Activated CD4-positive, alpha-beta memory T cell treated with anti-CD3 and anti-CD28 coated beads for 36 hours (primary cell): ENCODE measurements at regions of chr11 and their contacts with region 1.

Region 1: GRCh38 chr11:57667736-57668435 is at the start of gene ZDHHC5:
- DNase-seq: peak; percentile 100
- H3K4me3 Mint-ChIP-seq: peak within 1 kb of the TSS; percentile 83
- H3K27ac Mint-ChIP-seq: peak within 1 kb of the TSS; percentile 100
- H3K4me1 Mint-ChIP-seq: peaks cover 41% of the 10 kb centered on the region
- H3K27me3 Mint-ChIP-seq: no peaks in the 10 kb centered on the region
- total RNA-seq, gene ZDHHC5: 56.8 to 65.5 TPM

Region 2: DNA sequence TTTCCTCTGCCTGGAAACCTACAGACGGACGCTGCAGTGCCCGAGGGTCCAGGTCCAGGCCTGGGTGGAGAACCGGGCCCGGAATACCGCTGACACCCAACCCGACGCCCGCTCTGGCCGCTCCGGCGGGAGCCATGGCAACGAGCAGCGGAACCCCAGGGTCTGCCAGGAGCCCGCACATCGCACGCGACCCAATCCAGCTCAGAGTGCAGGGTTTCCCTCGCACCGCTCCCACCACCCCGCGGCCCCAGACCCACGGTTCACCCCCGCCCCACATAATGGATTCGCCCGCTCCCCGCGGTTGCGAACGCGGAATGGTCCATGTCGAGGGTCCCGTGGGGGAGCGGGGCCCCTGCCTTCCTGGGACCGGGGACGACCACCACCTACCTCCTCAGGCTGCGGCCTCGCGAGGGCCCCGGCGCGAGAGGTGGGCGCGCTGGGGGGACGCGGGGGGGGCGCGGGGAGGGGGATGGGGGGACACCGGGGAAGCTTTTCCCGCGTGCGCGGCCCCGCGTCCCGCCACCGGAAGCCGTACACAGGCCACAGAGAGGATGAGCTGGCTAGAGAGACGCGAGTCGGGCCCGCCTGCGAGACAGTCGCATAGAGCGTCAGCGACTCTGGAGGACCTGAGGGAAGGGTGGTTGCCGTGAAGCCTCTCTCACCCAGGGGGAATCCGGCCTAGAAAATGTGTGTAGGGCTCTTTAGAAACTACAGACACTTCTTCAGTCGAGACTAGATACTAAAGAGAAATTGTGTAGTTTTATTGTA is 332.4 kb before region 1 on chr11 and contains the start of gene SSRP1:
- CTCF ChIA-PET with region 1: no interaction called
- POLR2A ChIA-PET with region 1: no interaction called
- intact Hi-C with region 1: loop called (anchors 2 kb)
- DNase-seq: peak; percentile 92
- H3K4me3 Mint-ChIP-seq: peak within 1 kb of the TSS; percentile 91
- H3K27ac Mint-ChIP-seq: peak within 1 kb of the TSS; percentile 98
- H3K4me1 Mint-ChIP-seq: peaks cover 47% of the 10 kb centered on the region
- H3K27me3 Mint-ChIP-seq: no peaks in the 10 kb centered on the region
- total RNA-seq, gene SSRP1: 256 to 262 TPM

Region 3: GRCh38 chr11:57657194-57658022 is 10.5 kb before region 1 on chr11 and contains the start of gene CLP1:
- CTCF ChIA-PET with region 1: interaction called, 4 read pairs
- POLR2A ChIA-PET with region 1: interaction called, 6 read pairs
- intact Hi-C with region 1: loop called (anchors 1 kb)
- DNase-seq: peak; percentile 100
- H3K4me3 Mint-ChIP-seq: peak within 1 kb of the TSS; percentile 100
- H3K27ac Mint-ChIP-seq: peak within 1 kb of the TSS; percentile 94
- H3K4me1 Mint-ChIP-seq: peaks cover 33% of the 10 kb centered on the region
- H3K27me3 Mint-ChIP-seq: no peaks in the 10 kb centered on the region
- total RNA-seq, gene CLP1: 13.9 to 15.2 TPM

Region 4: DNA sequence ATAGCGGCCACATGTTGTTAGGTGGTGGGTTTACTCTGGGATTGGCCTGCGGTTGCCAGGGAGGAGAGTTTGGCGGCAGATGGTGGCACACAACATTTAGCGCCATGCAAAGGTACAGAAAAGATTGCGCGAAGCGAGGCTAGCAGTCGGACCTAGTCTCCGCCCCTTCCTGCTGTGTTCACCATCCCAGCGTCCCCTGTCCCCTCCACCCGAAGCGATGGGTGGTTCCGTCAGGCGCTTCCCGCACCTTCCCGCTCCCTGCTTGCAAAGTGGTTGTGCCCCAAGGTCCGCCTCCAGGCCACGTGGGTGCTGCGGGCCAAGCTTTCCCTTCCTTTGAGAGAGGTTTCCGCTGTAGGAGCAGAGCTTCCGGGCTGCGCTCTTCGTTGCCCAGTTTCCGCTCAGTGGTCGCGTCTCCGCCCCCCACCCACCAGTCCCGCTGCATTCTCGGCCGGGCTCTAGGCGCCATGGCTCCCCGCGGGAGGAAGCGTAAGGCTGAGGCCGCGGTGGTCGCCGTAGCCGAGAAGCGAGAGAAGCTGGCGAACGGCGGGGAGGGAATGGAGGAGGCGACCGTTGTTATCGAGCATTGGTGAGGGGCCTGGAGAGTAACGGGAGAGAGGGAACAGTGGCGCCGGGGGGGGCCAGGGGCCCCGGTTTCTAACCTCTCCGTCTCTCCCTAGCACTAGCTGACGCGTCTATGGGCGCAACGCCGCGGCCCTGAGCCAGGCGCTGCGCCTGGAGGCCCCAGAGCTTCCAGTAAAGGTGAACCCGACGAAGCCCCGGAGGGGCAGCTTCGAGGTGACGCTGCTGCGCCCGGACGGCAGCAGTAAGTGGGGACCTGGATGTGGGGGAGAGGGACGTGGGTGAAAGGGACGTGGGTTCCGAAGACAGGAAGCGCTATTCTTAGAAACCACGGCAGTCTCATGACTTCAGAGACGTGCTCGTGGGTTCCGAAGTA is 73.5 kb after region 1 on chr11 and contains the start of gene SELENOH:
- CTCF ChIA-PET with region 1: no interaction called
- POLR2A ChIA-PET with region 1: interaction called, 8 read pairs
- intact Hi-C with region 1: loop called (anchors 1 kb)
- DNase-seq: peak; percentile 98
- H3K4me3 Mint-ChIP-seq: peak within 1 kb of the TSS; percentile 97
- H3K27ac Mint-ChIP-seq: peak within 1 kb of the TSS; percentile 99
- H3K4me1 Mint-ChIP-seq: peaks cover 40% of the 10 kb centered on the region
- H3K27me3 Mint-ChIP-seq: no peaks in the 10 kb centered on the region
- total RNA-seq, gene SELENOH: 235 to 252 TPM

Region 5: DNA sequence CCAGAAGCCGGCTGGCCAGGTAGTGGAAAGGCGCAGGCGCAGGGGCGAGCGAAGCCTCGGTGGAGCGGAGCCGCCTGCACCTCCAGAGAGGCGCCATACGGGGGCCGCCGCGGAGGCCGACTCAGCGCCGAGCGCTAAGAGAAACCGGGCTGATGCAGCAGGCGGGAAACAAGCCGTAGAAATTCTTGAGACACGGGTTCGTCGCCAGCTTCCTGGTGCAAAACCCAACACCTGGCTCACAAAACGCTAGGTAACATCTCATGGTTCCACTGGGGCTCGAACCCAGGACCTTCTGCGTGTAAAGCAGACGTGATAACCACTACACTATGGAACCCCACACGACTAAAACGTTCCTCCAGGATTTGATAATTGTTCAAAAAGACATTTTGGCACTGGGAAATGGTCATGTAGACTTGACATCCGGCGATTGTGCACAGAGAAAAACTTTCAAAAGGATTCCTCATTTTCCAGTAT is 1882.5 kb after region 1 on chr11:
- CTCF ChIA-PET with region 1: no interaction called
- POLR2A ChIA-PET with region 1: no interaction called
- intact Hi-C with region 1: loop called (anchors 10 kb)
- DNase-seq: peak; percentile 91
- H3K4me3 Mint-ChIP-seq: peak overlapping the region; percentile 85
- H3K27ac Mint-ChIP-seq: peak overlapping the region; percentile 97
- H3K4me1 Mint-ChIP-seq: peaks cover 30% of the 10 kb centered on the region
- H3K27me3 Mint-ChIP-seq: peaks cover 7% of the 10 kb centered on the region